Ovary (tissue), 10 donors: ENCODE measurements at regions of chr6 and their contacts with region 1.

Region 1: GRCh38 chr6:150692604-150693003 is 92.9 kb downstream of the PLEKHG1 start:
- DNase-seq: no peak
- H3K4me3 ChIP-seq: no peak overlapping the region
- H3K27ac ChIP-seq: no peak overlapping the region
- H3K4me1 ChIP-seq: peaks cover 5% of the 10 kb centered on the region
- H3K27me3 ChIP-seq: no peaks in the 10 kb centered on the region
- CTCF ChIP-seq: no peak
- EP300 ChIP-seq: no peak
- POLR2A ChIP-seq: no peak

Region 2: DNA sequence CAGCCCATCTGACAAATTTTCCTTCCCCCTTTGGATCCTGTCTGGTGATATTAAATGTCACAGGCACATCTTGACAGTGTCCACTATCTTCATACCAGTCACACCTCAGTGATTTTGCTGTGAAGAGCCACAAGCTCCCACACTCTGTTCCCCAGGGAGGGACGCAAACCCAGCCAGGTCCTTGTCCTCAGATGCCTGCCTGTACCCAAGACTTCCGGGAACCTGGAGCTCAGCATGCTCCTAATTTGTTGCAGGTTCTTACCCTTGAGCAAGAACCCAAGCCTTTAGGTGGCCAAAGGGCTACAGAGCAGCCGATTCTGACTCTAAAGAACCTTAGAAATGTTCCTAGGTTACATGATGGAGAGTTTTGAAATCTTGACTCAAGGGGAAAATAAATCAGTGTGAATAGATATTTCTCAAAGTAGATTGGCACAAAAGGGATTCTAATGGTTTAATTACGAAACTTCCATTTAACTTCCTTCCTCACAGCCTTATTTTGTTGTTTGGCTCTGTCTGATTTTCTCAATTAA is 106.7 kb after region 1 on chr6:
- intact Hi-C with region 1: loop called in 1 of 4 experiments (anchors 10 kb)
- DNase-seq: peak in 1 of 5 donors; percentile 5
- H3K4me3 ChIP-seq: no peak overlapping the region
- H3K27ac ChIP-seq: no peak overlapping the region
- H3K4me1 ChIP-seq: no peaks in the 10 kb centered on the region
- H3K27me3 ChIP-seq: no peaks in the 10 kb centered on the region
- CTCF ChIP-seq: no peak
- EP300 ChIP-seq: no peak
- POLR2A ChIP-seq: no peak